ENCODE measurements at regions of chr11 and their contacts with region 1.

Region 1: GRCh38 chr11:2428322-2428795 is 16.0 kb downstream of the TRPM5 start:
- DNase-seq: peak; percentile 67 to 89 (median 78)
- ATAC-seq: peak; percentile 73 to 91 (median 78)
- H3K4me3 ChIP-seq: no peak overlapping the region
- H3K27ac ChIP-seq: no peak overlapping the region
- H3K4me1 ChIP-seq: no peaks in the 10 kb centered on the region
- H3K27me3 ChIP-seq: no peaks in the 10 kb centered on the region
- CTCF ChIP-seq: peak; percentile 71 to 87 (median 84)
- POLR2A ChIP-seq: no peak

Region 2: DNA sequence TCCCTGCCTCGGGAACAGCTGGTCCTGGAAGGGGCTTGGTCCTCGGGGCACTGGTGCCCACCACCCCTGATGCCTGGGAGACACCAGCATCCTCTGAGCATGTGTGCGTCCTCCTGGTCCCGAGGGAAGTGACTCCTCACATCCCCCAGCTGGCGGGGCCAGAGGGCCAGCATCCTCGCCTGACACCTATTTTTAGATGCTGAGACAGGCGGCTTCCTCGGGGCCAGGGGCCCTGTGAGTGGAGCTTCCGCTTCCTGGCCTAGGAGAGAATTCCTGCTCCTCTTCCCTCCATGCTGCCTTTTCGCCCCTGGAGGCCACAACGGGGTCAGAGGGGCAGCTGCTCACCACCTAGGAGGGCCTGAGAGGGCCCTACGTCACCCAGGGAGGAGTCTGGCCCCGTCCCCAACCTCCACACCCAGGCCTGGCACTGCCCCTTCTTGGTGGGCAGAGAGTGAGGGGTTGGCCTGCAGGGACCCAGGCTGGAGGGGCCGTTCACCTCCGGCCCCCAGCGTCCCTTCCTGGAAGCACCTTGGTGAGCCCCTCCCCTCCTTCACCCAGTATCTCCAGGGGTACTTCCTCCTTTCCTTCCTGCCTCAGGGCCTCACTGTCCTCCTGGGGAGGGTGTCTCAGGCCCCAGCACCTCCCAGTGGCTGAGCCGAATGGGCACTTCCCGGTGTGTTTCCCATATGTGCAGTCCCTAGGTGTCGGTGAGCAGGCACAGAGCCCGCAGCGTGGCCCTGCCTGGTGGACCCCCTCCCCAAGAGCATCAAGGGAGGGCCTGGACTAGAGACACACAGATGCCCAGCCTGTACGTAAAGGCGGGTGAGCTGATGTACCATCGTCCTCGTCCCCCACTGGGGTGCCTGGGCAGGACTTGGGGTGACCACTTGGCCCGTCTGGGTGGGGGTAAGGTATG is 45.2 kb before region 1 on chr11:
- intact Hi-C with region 1: no loop called
- DNase-seq: peak; percentile 86 to 92 (median 89)
- ATAC-seq: peak; percentile 43 to 78 (median 54)
- H3K4me3 ChIP-seq: peak overlapping the region in 6 of 12 donors; percentile 8 to 30 (median 18)
- H3K27ac ChIP-seq: peak overlapping the region; percentile 46 to 100 (median 99)
- H3K4me1 ChIP-seq: peaks cover 38 to 100% (median 87%) of the 10 kb centered on the region in 12 donors
- H3K27me3 ChIP-seq: no peaks in the 10 kb centered on the region
- CTCF ChIP-seq: peak in 5 of 12 donors; percentile 7 to 44 (median 25)
- POLR2A ChIP-seq: no peak

Region 3: DNA sequence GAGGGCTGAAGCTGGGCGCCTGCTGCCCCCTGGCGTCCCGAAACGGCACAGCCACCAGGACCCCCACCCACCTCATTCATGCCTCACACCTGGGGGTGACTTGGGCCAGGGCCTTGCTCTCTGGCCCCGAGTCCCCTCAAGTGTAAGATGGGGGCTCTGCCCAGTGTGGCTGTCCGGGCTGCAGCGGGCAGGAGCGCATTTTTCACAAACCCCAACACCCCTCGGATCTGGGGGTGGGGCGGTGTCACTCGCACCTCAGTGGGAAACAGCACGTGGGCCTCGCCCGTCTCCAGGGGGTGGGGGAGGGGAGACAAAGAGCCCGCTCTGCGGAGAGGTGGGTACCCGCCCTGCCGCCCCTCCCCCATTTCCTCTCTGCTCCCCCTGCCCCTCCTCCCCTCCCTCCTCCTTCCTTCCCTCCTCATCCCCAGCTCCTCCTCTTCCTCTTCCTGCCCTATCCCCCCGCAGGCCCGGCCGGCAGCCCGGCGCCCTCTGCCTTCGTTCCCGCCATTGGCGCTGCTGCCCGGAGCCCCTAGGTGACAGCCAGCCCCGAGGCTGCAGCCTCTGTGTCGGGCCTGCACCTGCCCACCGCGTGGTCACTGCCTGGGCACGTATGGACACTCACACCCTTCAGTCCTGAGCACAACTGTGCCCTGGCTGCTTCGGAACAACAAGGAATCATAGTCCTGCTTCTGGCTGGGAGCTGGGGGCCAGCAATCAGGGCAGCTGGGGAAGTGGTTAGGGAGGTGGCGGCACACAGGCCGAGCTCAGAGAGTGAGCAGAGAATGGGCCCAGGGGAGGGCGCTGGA is 464.1 kb after region 1 on chr11:
- intact Hi-C with region 1: loop called (anchors 1 to 5 kb)
- DNase-seq: peak; percentile 63 to 84 (median 79)
- ATAC-seq: peak in 3 of 4 donors; percentile 44 to 70 (median 59)
- H3K4me3 ChIP-seq: peak overlapping the region in 11 of 12 donors; percentile 2 to 67 (median 52)
- H3K27ac ChIP-seq: peak overlapping the region in 10 of 12 donors; percentile 33 to 83 (median 50)
- H3K4me1 ChIP-seq: peaks cover 5 to 39% (median 25%) of the 10 kb centered on the region in 12 donors
- H3K27me3 ChIP-seq: peaks cover 0 to 2% (median 0%) of the 10 kb centered on the region in 9 donors
- CTCF ChIP-seq: peak; percentile 87 to 96 (median 92)
- POLR2A ChIP-seq: no peak